HEK293 (cell line): ENCODE measurements at regions of chr3 and their contacts with region 1.

Region 1: GRCh38 chr3:58560771-58561311 is 16.4 kb downstream of the FAM107A start:
- H3K4me3 ChIP-seq: no peak overlapping the region
- H3K27ac ChIP-seq: no peak overlapping the region
- H3K4me1 ChIP-seq: no peaks in the 10 kb centered on the region
- CTCF ChIP-seq: no peak

Region 2: GRCh38 chr3:58217209-58217811 is 343.5 kb before region 1 on chr3:
- CTCF ChIA-PET with region 1: no interaction called
- POLR2A ChIA-PET with region 1: no interaction called
- H3K4me3 ChIP-seq: no peak overlapping the region
- H3K27ac ChIP-seq: no peak overlapping the region
- H3K4me1 ChIP-seq: no peaks in the 10 kb centered on the region
- CTCF ChIP-seq: no peak

Region 3: GRCh38 chr3:58260261-58260731 is 300.5 kb before region 1 on chr3:
- CTCF ChIA-PET with region 1: no interaction called
- POLR2A ChIA-PET with region 1: no interaction called
- H3K4me3 ChIP-seq: no peak overlapping the region
- H3K27ac ChIP-seq: no peak overlapping the region
- H3K4me1 ChIP-seq: no peaks in the 10 kb centered on the region
- CTCF ChIP-seq: no peak

Region 4: GRCh38 chr3:58630076-58630709 is 69.4 kb after region 1 on chr3:
- CTCF ChIA-PET with region 1: interaction called, 159 read pairs
- POLR2A ChIA-PET with region 1: interaction called, 4 read pairs
- H3K4me3 ChIP-seq: no peak overlapping the region
- H3K27ac ChIP-seq: no peak overlapping the region
- H3K4me1 ChIP-seq: no peaks in the 10 kb centered on the region
- CTCF ChIP-seq: peak; percentile 38; the same call in 1 of the 2 replicates

Region 5: DNA sequence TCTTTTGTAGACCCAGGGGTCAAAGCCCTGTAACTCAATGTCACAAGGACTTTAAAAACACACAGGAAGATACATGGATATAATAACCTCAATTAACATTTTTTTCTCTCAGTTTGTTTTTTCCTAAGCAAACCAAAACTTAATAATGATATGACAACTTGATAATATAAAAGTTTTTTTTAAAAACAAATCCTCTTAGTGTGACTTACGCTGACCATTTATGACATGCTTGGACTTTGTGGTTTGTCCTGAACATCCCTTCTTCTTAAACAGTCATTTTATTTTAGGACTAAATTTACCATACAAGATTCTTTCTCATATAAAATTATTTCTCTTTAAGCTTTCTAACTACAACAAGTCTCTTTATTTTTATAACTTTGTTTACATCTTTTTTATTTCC is 131.2 kb after region 1 on chr3:
- CTCF ChIA-PET with region 1: no interaction called
- POLR2A ChIA-PET with region 1: no interaction called
- H3K4me3 ChIP-seq: no peak overlapping the region
- H3K27ac ChIP-seq: no peak overlapping the region
- H3K4me1 ChIP-seq: no peaks in the 10 kb centered on the region
- CTCF ChIP-seq: no peak